Gastrocnemius medialis (tissue), 4 donors: ENCODE measurements at regions of chr3 and their contacts with region 1.

Region 1: DNA sequence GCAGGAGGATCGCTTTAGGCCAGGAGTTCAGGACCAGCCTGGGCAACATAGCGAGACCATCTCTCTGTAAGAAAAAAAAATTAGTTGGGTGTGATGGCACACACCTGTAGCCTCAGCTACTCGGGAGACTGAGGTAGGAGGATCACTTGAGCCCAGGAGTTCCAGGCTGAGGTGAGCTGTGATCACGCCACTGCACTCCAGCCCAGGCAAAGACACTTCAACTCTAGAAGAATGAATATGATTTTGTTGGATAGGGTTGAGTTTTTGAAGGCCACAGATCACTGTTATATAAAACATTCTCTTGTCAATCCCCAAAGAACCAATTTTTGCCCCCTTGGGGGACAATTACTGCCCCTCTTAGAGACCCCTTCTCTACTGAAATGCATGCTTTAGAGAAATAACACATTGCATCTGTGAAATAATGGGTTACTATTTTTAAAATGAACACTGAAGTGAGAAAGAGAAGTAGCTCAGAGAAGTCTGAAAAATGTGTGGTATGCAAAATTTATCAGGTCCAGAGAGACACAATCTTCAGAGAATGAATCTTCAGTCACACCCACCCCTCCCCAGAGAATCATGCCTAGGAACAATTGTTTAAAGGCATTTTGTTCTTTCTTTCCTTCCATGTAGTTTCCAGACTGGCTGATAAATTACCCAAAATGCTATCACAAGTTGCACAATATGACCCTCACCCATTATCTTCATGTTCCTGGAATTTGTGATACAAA is 42.7 kb downstream of the METTL6 start:
- DNase-seq: no peak
- ATAC-seq: no peak
- H3K4me3 ChIP-seq: no peak overlapping the region
- H3K27ac ChIP-seq: no peak overlapping the region
- H3K4me1 ChIP-seq: peaks cover 0 to 4% of the 10 kb centered on the region in 2 donors
- H3K27me3 ChIP-seq: no peaks in the 10 kb centered on the region
- CTCF ChIP-seq: no peak
- POLR2A ChIP-seq: no peak

Region 2: GRCh38 chr3:15261274-15261673 is 123.4 kb before region 1 on chr3:
- in situ Hi-C with region 1: loop called (anchors 5 to 10 kb)
- intact Hi-C with region 1: no loop called
- DNase-seq: no peak
- ATAC-seq: no peak
- H3K4me3 ChIP-seq: no peak overlapping the region
- H3K27ac ChIP-seq: peak overlapping the region in 1 of 4 donors; percentile 15
- H3K4me1 ChIP-seq: peaks cover 22 to 24% of the 10 kb centered on the region in 2 donors
- H3K27me3 ChIP-seq: no peaks in the 10 kb centered on the region
- CTCF ChIP-seq: no peak
- POLR2A ChIP-seq: no peak

Region 3: DNA sequence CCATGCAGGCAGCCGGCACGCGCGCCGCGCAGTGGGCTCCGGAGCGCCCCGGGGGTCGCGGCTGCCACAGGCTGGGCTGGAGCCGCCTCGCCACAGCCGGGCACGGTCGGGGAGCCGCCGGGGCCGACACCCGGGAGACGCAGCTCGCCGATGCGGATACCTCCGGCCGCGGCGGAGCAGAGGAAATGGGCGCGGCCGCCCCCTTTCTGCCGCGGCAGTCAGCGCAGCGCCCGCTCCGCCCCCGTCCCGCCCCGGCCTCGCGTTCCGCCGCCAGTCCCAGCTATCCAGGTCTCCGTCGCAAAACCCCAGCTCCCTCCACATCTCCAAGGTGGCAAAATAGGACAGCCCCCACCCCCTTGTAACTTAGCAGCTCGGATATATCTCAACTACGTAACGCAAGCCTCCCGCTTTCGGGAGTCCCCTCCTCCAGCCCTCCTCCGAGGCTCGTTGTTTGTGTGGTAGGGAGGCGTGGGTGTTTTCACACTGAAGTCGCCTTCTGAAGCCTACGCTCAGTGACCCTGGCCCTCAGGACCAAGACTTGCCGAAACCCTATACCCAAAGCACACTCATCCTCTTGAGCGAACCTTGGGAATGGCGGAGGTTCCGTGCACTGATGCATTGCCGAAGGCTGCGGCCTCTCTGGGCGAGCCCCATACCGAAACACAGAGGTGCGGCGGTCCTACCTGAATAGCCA is 52.1 kb before region 1 on chr3 and contains the start of gene SH3BP5:
- in situ Hi-C with region 1: loop called in 2 of 4 experiments (anchors 5 to 10 kb)
- intact Hi-C with region 1: no loop called
- DNase-seq: peak; percentile 52 to 66
- ATAC-seq: peak; percentile 63 to 66
- H3K4me3 ChIP-seq: peak within 1 kb of the TSS; percentile 92 to 97 (median 93)
- H3K27ac ChIP-seq: peak within 1 kb of the TSS; percentile 88 to 93 (median 91)
- H3K4me1 ChIP-seq: peaks cover 38 to 40% of the 10 kb centered on the region in 2 donors
- H3K27me3 ChIP-seq: no peaks in the 10 kb centered on the region
- CTCF ChIP-seq: peak; percentile 73 to 95 (median 91)
- POLR2A ChIP-seq: peak; percentile 89 to 91
- total RNA-seq, gene SH3BP5: 31.5 to 111 (median 75.5) TPM